ENCODE measurements at regions of chr22 and their contacts with region 1.

Region 1: GRCh38 chr22:50244420-50245213 is at the start of gene TUBGCP6:
- DNase-seq: peak; percentile 96 to 98 (median 97)
- ATAC-seq: peak; percentile 90
- H3K4me3 ChIP-seq: peak within 1 kb of the TSS; percentile 68
- H3K4me1 ChIP-seq: peaks cover 54% of the 10 kb centered on the region
- CTCF ChIP-seq: no peak
- total RNA-seq, gene TUBGCP6: 34.5 to 41.6 (median 40.5) TPM

Region 2: GRCh38 chr22:49970528-49971231 is 273.9 kb before region 1 on chr22:
- intact Hi-C with region 1: no loop called
- DNase-seq: peak; percentile 93 to 98 (median 93)
- ATAC-seq: peak; percentile 85
- H3K4me3 ChIP-seq: no peak overlapping the region
- H3K4me1 ChIP-seq: peaks cover 30% of the 10 kb centered on the region
- CTCF ChIP-seq: no peak

Region 3: DNA sequence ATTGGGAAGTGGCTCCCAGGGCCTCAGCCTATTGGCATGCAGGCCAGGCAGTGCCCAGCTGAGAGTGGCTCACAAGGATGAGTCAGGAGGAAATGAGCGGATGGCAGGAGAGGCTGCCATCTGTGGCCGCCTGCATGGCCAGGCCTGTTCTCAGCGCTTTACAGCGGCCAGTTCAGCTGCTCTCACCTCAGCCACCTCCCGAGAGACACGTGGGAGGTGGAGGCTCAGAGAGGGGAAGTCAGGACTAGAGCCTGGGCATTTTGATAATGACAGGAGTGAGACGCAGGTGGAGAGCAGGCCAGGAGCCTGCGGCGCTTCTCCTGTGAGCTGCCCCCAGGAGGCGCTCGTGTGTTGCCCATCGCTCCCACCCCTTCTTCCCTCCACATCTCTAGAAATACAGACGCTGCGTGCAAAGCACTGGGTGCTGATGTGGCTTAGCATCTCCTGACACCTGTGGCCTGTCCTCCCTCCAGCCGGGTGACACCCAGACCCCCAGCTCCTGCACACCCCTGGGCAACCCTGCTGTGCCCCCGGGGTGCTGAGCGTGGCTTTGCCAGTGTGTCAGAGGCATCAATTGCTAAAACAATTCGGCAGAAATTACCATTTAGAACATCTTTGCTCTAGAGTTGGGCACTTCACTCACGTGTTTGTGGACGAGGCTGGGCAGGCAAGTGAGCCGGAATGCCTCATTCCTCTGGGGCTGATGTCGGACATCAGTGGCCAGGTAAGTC is 95.5 kb before region 1 on chr22:
- intact Hi-C with region 1: no loop called
- DNase-seq: peak; percentile 73 to 79 (median 75)
- ATAC-seq: peak; percentile 92
- H3K4me3 ChIP-seq: no peak overlapping the region
- H3K4me1 ChIP-seq: no peaks in the 10 kb centered on the region
- CTCF ChIP-seq: peak; percentile 81

Region 4: DNA sequence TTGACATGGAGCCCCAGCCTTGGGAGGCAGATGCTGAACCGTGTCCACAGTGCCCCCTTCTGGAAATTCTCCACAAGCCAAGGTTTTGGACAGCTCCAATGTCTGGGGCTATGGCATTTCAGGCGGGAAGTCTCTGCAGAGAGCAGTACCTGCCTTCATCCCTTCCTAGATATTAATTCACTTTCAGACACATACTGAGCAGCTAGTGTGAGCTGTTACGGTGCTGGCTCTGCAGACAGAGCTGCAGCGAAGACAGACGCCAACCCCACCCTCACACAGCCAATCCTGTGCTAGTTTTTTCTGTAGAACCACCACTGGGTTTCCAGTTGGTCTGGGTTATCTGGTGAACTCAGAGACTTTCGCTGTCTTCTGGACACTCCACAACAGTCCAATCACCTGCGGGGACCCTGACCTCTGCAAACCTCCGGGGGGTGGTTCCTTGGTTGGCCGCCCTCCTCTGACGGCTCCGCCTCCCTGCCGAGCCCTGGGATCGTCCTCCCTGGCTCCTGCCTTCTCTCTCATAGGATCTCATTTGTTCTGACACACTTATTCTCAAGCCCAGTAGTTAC is 253.8 kb after region 1 on chr22:
- intact Hi-C with region 1: loop called in 1 of 2 experiments (anchors 10 kb)
- DNase-seq: peak; percentile 57 to 90 (median 77)
- ATAC-seq: peak; percentile 93
- H3K4me3 ChIP-seq: no peak overlapping the region
- H3K4me1 ChIP-seq: peaks cover 4% of the 10 kb centered on the region
- CTCF ChIP-seq: peak; percentile 51